Calu3 (cell line): ENCODE measurements at regions of chr16 and their contacts with region 1.

Region 1: GRCh38 chr16:20849587-20850390 is 43.5 kb downstream of the REXO5 start:
- DNase-seq: peak; percentile 84
- H3K4me3 Mint-ChIP-seq: no peak overlapping the region
- H3K27ac Mint-ChIP-seq: no peak overlapping the region
- H3K4me1 Mint-ChIP-seq: peaks cover 10% of the 10 kb centered on the region
- H3K27me3 Mint-ChIP-seq: no peaks in the 10 kb centered on the region
- CTCF ChIP-seq: peak; percentile 94

Region 2: DNA sequence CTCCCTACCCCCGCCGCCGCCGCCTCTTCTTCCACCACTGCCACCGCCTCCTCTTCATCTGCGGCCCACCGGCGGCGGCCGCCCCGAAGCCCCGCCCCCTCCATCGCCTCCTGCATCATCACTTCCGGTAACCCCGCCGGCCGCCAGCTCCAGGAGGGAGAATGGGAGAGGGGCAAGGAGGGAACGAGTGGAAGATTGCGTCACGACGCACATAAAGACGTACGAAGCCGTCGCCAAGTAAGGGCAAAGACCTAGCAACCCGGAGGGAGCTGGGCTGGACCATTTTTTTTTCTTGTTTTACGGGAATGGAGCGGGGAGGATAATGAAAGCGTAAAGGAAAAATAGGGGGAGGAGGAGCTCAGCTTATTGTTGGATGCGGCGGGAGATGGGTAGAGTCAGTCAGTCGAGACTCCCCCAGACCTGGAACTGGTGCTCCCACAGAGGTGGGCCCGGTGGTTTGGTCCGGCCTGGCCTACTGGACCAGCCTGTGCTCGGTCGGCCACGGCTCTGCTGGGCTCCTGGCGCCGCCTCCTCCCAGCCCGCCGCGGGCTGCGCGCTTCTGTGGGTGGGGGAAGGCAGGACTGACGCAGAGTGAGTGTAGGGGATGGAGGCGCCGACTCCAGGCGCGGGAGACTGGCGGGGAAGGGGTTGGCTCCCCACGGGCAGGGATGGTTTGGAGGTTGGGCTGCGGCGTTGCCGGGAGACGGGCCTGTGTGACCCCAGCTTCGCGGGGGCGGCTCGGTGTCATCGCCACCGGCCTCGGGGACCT is 50.7 kb after region 1 on chr16 and contains the starts of genes DCUN1D3 and LYRM1:
- CTCF ChIA-PET with region 1: interaction called, 5 read pairs
- intact Hi-C with region 1: loop called (anchors 2 kb)
- DNase-seq: peak; percentile 96
- H3K4me3 Mint-ChIP-seq: peak within 1 kb of the TSS; percentile 75
- H3K27ac Mint-ChIP-seq: peak within 1 kb of the TSS; percentile 94
- H3K4me1 Mint-ChIP-seq: peaks cover 66% of the 10 kb centered on the region
- H3K27me3 Mint-ChIP-seq: no peaks in the 10 kb centered on the region
- CTCF ChIP-seq: no peak
- total RNA-seq, gene DCUN1D3: 17.0 and 21.0 TPM in 2 replicates
- total RNA-seq, gene LYRM1: 33.4 and 36.5 TPM in 2 replicates

Region 3: DNA sequence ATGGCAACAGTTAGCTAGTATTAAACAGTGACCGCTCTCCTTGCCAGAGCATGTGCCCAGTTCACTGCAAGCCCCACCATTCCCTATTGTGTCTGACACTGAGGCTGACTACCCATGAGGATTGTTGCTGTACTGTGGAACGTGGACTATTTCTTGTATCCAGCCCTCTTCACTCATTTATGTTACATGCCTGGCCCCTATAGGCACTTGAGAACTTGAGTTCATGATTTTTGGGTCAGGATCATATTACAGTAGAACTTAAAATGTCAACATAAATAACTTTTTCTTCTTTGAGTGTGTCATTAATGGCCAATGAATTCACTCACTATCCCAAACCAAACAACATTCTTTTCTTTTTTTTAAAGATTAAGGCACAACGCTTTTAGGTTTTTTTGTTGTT is 106.5 kb after region 1 on chr16:
- CTCF ChIA-PET with region 1: no interaction called
- intact Hi-C with region 1: loop called (anchors 5 kb)
- DNase-seq: no peak
- H3K4me3 Mint-ChIP-seq: no peak overlapping the region
- H3K27ac Mint-ChIP-seq: no peak overlapping the region
- H3K4me1 Mint-ChIP-seq: no peaks in the 10 kb centered on the region
- H3K27me3 Mint-ChIP-seq: no peaks in the 10 kb centered on the region
- CTCF ChIP-seq: no peak

Region 4: GRCh38 chr16:21009815-21010214 is 160.0 kb after region 1 on chr16:
- CTCF ChIA-PET with region 1: no interaction called
- intact Hi-C with region 1: loop called (anchors 10 kb)
- DNase-seq: no peak
- H3K4me3 Mint-ChIP-seq: no peak overlapping the region
- H3K27ac Mint-ChIP-seq: no peak overlapping the region
- H3K4me1 Mint-ChIP-seq: no peaks in the 10 kb centered on the region
- H3K27me3 Mint-ChIP-seq: peaks cover 42% of the 10 kb centered on the region
- CTCF ChIP-seq: no peak

Region 5: GRCh38 chr16:21083729-21084268 is 234.0 kb after region 1 on chr16:
- CTCF ChIA-PET with region 1: interaction called, 10 read pairs
- intact Hi-C with region 1: loop called (anchors 1 kb)
- DNase-seq: peak; percentile 82
- H3K4me3 Mint-ChIP-seq: no peak overlapping the region
- H3K27ac Mint-ChIP-seq: no peak overlapping the region
- H3K4me1 Mint-ChIP-seq: peaks cover 7% of the 10 kb centered on the region
- H3K27me3 Mint-ChIP-seq: no peaks in the 10 kb centered on the region
- CTCF ChIP-seq: peak; percentile 82

Region 6: GRCh38 chr16:21101631-21102420 is 252.0 kb after region 1 on chr16:
- CTCF ChIA-PET with region 1: interaction called, 4 read pairs
- intact Hi-C with region 1: loop called (anchors 1 kb)
- DNase-seq: peak; percentile 61
- H3K4me3 Mint-ChIP-seq: no peak overlapping the region
- H3K27ac Mint-ChIP-seq: no peak overlapping the region
- H3K4me1 Mint-ChIP-seq: peaks cover 14% of the 10 kb centered on the region
- H3K27me3 Mint-ChIP-seq: peaks cover 41% of the 10 kb centered on the region
- CTCF ChIP-seq: peak; percentile 47

Region 7: DNA sequence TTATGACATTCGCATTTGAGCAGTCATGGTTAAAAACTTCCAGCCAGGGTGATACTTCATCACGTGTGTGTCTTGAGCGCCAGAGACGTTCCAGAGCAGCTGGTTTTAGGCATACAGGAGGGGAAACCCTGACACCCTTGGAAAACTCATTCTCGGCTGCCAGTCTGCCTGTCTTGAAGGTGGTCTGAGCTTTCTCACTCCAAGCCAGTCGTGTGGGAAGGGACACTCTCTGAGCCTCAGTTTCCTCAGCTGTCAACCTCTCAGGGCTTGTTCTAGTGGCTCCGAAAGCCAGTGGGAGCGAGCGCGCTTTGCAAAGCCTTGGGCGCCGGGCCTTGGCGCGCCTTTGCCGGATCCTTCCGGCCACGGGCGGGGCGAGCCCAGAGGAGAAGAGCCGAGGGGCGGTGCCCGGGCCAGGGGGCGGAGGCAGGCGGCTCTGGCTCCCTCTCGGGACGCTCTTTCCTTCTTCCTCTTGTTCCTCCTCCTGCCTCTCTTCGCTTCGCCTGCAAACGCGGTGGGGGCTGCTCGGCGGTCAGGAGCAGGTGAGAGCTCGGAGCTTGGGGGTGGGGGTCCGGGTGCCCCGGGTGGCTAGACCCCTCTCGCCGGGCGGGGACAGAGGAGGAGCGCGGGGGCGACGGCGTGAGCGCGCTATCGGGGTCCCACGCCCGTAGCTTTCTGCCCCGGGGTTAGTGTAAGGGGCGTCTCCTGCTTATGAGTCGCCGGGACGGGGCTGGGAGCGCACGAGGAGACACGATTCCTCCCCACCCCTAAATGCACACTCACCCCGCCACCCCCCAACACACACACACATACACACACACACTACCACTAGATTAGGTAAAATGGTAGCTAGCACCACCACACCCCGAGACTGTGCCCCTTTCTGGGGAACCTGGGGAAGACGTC is 308.7 kb after region 1 on chr16 and contains the start of gene LDAF1:
- CTCF ChIA-PET with region 1: interaction called, 4 read pairs
- intact Hi-C with region 1: loop called (anchors 5 kb)
- DNase-seq: peak; percentile 94
- H3K4me3 Mint-ChIP-seq: peak within 1 kb of the TSS; percentile 100
- H3K27ac Mint-ChIP-seq: peak within 1 kb of the TSS; percentile 87
- H3K4me1 Mint-ChIP-seq: peaks cover 42% of the 10 kb centered on the region
- H3K27me3 Mint-ChIP-seq: no peaks in the 10 kb centered on the region
- CTCF ChIP-seq: no peak
- total RNA-seq, gene LDAF1: 46.7 and 50.1 TPM in 2 replicates